ENCODE measurements at regions of chr16 and their contacts with region 1.

Region 1: DNA sequence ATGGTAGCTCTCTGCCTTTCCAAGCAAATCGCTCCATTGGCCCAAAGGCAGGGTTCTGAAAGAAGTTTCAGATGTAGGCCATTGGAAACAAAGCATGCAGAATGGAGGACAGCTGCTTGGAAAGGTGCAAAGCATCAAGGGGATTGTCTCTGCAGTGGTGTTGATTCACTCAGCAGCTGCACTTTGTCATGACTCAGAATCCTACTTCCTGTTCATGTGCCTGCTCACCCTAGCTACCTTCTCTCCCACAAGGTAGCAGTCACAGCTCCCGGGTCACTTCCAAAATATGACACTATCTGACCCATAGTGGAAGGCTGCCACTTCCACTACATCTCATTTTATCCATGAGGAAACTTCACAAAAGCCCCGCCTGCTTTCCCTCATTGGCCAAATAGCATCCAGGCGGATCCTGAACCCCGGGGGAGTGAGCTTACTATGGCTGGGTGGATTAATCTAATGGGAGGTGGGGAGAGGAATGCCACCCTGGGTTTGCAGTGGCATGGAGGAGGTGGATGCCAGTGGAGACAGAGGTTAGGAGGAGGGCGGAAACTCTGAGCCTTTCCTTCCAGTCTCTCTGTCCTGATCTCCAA is 74.7 kb upstream of the NKD1 start:
- DNase-seq: peak; percentile 14
- H3K4me3 Mint-ChIP-seq: no peak overlapping the region
- H3K27ac Mint-ChIP-seq: peak overlapping the region; percentile 27
- H3K4me1 Mint-ChIP-seq: peaks cover 13% of the 10 kb centered on the region
- H3K27me3 Mint-ChIP-seq: peaks cover 10% of the 10 kb centered on the region

Region 2: DNA sequence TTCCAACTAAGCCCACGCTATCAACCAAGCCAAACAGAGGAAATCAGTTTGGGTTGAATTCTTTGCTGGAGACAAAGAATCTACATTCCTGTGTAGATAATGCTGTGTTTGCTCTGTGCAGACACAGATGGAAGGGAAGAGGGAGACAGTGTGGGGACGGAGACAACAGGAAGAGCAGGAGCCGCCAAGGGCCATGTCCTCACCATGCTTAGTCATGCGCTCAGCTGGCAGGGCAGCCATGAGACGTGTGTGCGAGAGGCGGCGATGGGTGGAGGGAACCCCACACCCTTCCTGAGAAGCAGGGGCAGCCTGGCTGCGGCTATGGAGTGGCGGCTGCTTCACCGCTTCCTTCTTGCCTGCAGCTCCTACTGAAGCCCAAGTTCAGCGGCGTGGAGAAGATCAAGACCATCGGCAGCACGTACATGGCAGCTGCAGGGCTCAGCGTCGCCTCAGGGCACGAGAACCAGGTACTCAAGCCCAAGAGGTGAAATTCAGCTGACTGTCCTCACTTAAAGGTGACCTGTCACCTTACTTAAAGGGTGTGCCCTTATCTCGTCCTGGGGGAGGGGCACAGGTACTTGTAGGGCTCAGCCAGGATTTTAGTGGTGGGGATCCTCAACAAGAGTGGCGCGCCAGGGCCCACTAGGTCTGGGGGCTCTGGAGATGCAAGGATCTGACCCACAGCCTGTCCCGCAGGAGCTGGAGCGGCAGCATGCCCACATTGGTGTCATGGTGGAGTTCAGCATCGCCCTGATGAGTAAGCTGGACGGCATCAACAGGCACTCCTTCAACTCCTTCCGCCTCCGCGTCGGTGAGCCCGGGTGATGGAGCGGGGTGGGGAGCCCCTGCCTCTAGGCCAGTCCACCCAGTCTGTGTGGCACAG is 159.6 kb before region 1 on chr16:
- CTCF ChIA-PET with region 1: no interaction called
- POLR2A ChIA-PET with region 1: no interaction called
- DNase-seq: peak; percentile 73
- H3K4me3 Mint-ChIP-seq: peak overlapping the region; percentile 47
- H3K27ac Mint-ChIP-seq: peak overlapping the region; percentile 87
- H3K4me1 Mint-ChIP-seq: peaks cover 52% of the 10 kb centered on the region
- H3K27me3 Mint-ChIP-seq: no peaks in the 10 kb centered on the region

Region 3: GRCh38 chr16:50449755-50450154 is 23.7 kb before region 1 on chr16:
- CTCF ChIA-PET with region 1: interaction called, 10 read pairs
- POLR2A ChIA-PET with region 1: no interaction called
- DNase-seq: no peak
- H3K4me3 Mint-ChIP-seq: no peak overlapping the region
- H3K27ac Mint-ChIP-seq: no peak overlapping the region
- H3K4me1 Mint-ChIP-seq: no peaks in the 10 kb centered on the region
- H3K27me3 Mint-ChIP-seq: no peaks in the 10 kb centered on the region

Measured in activated CD4-positive, alpha-beta T cell treated with anti-CD3 and anti-CD28 coated beads, Interleukin-2, amount 10 ng/mL, durations not matched to agents 7 days and 5 days (primary cell).